Ascending aorta (tissue), 2 donors: ENCODE measurements at regions of chr7 and their contacts with region 1.

Region 1: GRCh38 chr7:66628361-66629140 is at the start of gene KCTD7:
- DNase-seq: peak; percentile 95 to 99
- H3K4me3 ChIP-seq: peak within 1 kb of the TSS; percentile 72 to 91
- H3K27ac ChIP-seq: peak within 1 kb of the TSS; percentile 95 to 97
- H3K4me1 ChIP-seq: peaks cover 9 to 15% of the 10 kb centered on the region in 2 donors
- H3K27me3 ChIP-seq: no peaks in the 10 kb centered on the region
- CTCF ChIP-seq: no peak
- total RNA-seq, gene KCTD7: 12.5 TPM

Region 2: GRCh38 chr7:66281678-66282590 is 346.6 kb before region 1 on chr7:
- intact Hi-C with region 1: no loop called
- DNase-seq: peak in 1 of 2 donors; percentile 67
- H3K4me3 ChIP-seq: peak overlapping the region in 1 of 2 donors; percentile 0
- H3K27ac ChIP-seq: peak overlapping the region; percentile 66 to 70
- H3K4me1 ChIP-seq: peaks cover 0 to 18% of the 10 kb centered on the region in 2 donors
- H3K27me3 ChIP-seq: no peaks in the 10 kb centered on the region
- CTCF ChIP-seq: no peak

Region 3: DNA sequence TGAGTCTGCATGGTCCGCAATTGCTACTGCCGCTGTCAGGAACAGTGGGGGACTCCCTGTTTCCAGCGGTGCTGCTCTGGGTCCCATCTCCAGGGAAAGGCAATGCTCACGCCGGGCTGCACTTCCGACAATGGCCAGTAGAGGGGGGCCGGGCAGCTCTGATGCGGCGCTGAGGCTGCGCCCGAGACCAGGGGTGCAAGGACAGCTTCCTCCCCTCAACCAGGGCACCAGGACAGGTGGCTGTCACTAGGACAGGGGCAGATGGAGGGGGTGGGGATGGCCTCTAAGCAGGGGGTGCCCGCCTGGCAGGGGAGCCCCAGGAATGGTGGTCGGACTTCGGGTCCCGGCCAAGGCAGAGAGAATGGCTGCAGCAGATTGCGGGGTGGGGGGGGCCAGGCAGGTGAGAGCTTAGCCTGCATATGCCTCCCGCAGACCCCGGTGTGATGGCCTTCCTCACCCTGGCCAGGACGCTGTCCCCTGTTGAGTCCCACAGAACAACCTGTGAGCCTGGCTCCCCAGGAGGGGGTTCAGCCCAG is 70.9 kb before region 1 on chr7:
- intact Hi-C with region 1: loop called (anchors 2 kb)
- DNase-seq: peak in 1 of 2 donors; percentile 80
- H3K4me3 ChIP-seq: peak overlapping the region in 1 of 2 donors; percentile 33
- H3K27ac ChIP-seq: no peak overlapping the region
- H3K4me1 ChIP-seq: no peaks in the 10 kb centered on the region
- H3K27me3 ChIP-seq: no peaks in the 10 kb centered on the region
- CTCF ChIP-seq: peak; percentile 87 to 98 (median 96)

Region 4: DNA sequence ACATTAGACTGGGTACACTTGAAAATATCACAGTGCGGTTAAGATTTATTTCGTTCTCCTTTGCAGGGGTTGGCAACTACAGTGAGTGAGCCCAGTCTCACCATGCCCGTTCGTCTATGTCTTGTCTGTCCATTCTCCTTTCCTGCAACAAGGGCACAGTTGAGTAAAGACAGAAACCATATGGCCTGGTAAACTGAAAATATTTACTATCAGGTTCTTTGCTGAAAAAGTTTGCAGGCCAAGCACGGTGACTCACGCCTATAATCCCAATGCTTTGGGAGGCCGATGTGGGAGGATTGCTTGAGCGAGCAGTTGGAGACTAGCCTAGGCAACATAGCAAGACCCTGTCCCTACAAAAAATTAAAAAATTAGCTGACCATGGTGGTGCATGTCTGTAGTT is 11.3 kb before region 1 on chr7:
- intact Hi-C with region 1: no loop called
- DNase-seq: no peak
- H3K4me3 ChIP-seq: no peak overlapping the region
- H3K27ac ChIP-seq: no peak overlapping the region
- H3K4me1 ChIP-seq: no peaks in the 10 kb centered on the region
- H3K27me3 ChIP-seq: no peaks in the 10 kb centered on the region
- CTCF ChIP-seq: no peak

Region 5: GRCh38 chr7:66654123-66654732 is 25.7 kb after region 1 on chr7:
- intact Hi-C with region 1: loop called (anchors 1 kb)
- DNase-seq: peak; percentile 92 to 99
- H3K4me3 ChIP-seq: peak overlapping the region; percentile 87 to 97
- H3K27ac ChIP-seq: peak overlapping the region; percentile 98 to 99
- H3K4me1 ChIP-seq: peaks cover 0 to 13% of the 10 kb centered on the region in 2 donors
- H3K27me3 ChIP-seq: no peaks in the 10 kb centered on the region
- CTCF ChIP-seq: peak in 2 of 3 experiments; percentile 14 to 30

Region 6: DNA sequence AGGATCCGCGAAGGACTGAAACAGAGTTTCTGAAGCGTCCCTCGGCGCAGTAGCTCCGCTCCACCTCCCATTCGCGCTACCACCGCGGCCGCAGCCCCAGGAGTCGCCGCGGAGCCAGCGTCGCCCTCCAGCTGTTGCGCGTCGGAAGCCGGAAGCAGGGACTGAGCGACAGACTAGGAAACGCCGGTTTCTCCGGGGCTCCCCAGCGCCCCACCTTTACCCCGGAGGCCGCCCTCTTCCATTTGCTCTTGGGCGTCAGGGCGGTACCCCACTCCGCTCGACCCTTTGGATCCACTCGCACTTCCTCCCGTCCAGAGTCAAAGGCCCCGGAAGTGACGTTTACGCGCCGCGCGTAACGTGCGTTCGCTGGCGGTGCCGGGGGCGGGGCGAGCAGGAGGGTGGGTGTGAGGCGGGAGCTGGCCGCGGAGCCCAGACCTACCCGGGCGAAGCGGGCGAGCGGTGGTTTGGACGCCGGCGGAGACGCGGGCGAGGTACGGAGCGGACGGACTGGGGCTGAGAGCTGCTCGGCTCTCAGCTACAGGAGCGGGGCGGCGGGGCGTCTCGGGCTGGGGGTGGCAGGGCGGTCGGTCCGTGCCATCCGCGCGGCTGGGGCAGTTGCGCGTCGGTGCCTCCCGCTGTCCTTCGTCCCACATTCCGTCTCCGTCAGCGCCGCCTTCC is 111.9 kb after region 1 on chr7 and contains the start of gene RABGEF1:
- intact Hi-C with region 1: loop called (anchors 1 kb)
- DNase-seq: peak; percentile 83 to 99
- H3K4me3 ChIP-seq: peak within 1 kb of the TSS; percentile 76 to 86
- H3K27ac ChIP-seq: peak within 1 kb of the TSS; percentile 94 to 100
- H3K4me1 ChIP-seq: peaks cover 0 to 15% of the 10 kb centered on the region in 2 donors
- H3K27me3 ChIP-seq: no peaks in the 10 kb centered on the region
- CTCF ChIP-seq: peak in 1 of 3 experiments; percentile 21
- total RNA-seq, gene RABGEF1: 31.6 TPM

Region 7: GRCh38 chr7:66920769-66921395 is 292.3 kb after region 1 on chr7 and contains the start of gene TMEM248:
- intact Hi-C with region 1: loop called (anchors 1 kb)
- DNase-seq: peak; percentile 38 to 94
- H3K4me3 ChIP-seq: peak within 1 kb of the TSS; percentile 86 to 97
- H3K27ac ChIP-seq: peak within 1 kb of the TSS; percentile 74 to 86
- H3K4me1 ChIP-seq: peaks cover 6 to 25% of the 10 kb centered on the region in 2 donors
- H3K27me3 ChIP-seq: no peaks in the 10 kb centered on the region
- CTCF ChIP-seq: no peak
- total RNA-seq, gene TMEM248: 278 TPM